Transverse colon (tissue), 4 donors: ENCODE measurements at regions of chr19 and their contacts with region 1.

Region 1: GRCh38 chr19:52155596-52156359 is 15.6 kb downstream of the ZNF836 start:
- DNase-seq: no peak
- H3K4me3 ChIP-seq: no peak overlapping the region
- H3K27ac ChIP-seq: no peak overlapping the region
- H3K4me1 ChIP-seq: no peaks in the 10 kb centered on the region
- H3K27me3 ChIP-seq: no peaks in the 10 kb centered on the region
- CTCF ChIP-seq: no peak
- EP300 ChIP-seq: no peak
- POLR2A ChIP-seq: no peak

Region 2: GRCh38 chr19:52206481-52206880 is 50.7 kb after region 1 on chr19:
- in situ Hi-C with region 1: no loop called
- intact Hi-C with region 1: loop called (anchors 5 kb)
- DNase-seq: no peak
- H3K4me3 ChIP-seq: no peak overlapping the region
- H3K27ac ChIP-seq: no peak overlapping the region
- H3K4me1 ChIP-seq: no peaks in the 10 kb centered on the region
- H3K27me3 ChIP-seq: no peaks in the 10 kb centered on the region
- CTCF ChIP-seq: no peak
- EP300 ChIP-seq: no peak
- POLR2A ChIP-seq: no peak